ENCODE measurements at regions of chr7 and their contacts with region 1.

Region 1: GRCh38 chr7:134514663-134515062 is 12.7 kb upstream of the AKR1B10 start:
- DNase-seq: peak; percentile 23
- ATAC-seq: peak; percentile 82
- H3K4me3 Mint-ChIP-seq: no peak overlapping the region
- H3K27ac Mint-ChIP-seq: no peak overlapping the region
- H3K4me1 Mint-ChIP-seq: peaks cover 9% of the 10 kb centered on the region
- H3K27me3 Mint-ChIP-seq: peaks cover 10% of the 10 kb centered on the region
- CTCF ChIP-seq: peak; percentile 78

Region 2: DNA sequence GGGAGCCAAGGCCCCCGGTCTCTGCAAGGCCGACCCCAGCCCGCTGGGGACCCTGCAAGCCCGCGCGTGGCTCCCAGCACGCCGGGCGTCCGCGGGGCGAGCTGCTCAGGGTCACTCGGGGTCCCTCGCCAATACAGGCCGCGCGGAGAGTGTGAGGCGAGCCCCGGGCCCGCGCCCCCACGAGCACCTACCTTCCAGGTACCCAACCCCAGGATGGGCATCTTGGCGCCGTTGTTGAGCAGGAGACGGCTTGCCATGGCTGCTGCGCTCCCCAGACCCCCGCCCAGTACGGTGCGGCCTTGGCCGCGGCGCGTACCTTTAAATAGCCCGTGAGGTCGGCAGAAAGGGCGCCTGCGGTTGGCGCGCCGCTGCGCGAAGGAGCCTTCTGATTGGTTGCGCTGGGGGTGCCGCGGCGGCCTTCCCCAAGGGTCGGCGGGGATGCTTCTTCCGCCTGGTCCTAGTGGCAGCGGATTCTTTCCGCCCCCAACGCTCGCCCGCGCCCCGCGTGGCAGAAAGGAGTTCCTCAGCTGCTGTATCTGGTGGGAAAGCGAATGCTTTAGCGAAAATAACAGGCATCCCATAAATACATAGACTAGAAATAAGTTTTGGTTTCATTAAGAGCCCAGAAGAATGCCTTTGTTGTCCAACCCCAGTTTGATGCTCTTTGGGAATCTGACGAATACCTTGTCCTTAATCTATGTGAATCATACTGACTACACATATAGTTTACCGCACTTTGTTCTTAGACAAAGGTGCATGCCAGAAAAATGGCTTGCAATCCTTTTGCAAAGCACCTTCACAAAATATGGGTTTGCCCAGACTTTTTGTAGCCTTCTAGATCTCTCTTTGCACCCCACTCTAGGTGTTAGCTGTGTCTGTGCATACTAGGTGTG is 55.6 kb before region 1 on chr7 and contains the start of gene AKR1B1:
- CTCF ChIA-PET with region 1: interaction called, 18 read pairs
- POLR2A ChIA-PET with region 1: no interaction called
- intact Hi-C with region 1: no loop called
- DNase-seq: peak; percentile 94
- ATAC-seq: peak; percentile 92
- H3K4me3 Mint-ChIP-seq: peak within 1 kb of the TSS; percentile 85
- H3K27ac Mint-ChIP-seq: peak within 1 kb of the TSS; percentile 78
- H3K4me1 Mint-ChIP-seq: peaks cover 46% of the 10 kb centered on the region
- H3K27me3 Mint-ChIP-seq: no peaks in the 10 kb centered on the region
- CTCF ChIP-seq: peak; percentile 50
- total RNA-seq, gene AKR1B1: 106 to 108 TPM

Region 3: GRCh38 chr7:134527979-134528371 is 13.3 kb after region 1 on chr7:
- CTCF ChIA-PET with region 1: interaction called, 16 read pairs
- POLR2A ChIA-PET with region 1: no interaction called
- intact Hi-C with region 1: no loop called
- DNase-seq: no peak
- ATAC-seq: no peak
- H3K4me3 Mint-ChIP-seq: no peak overlapping the region
- H3K27ac Mint-ChIP-seq: no peak overlapping the region
- H3K4me1 Mint-ChIP-seq: no peaks in the 10 kb centered on the region
- H3K27me3 Mint-ChIP-seq: peaks cover 8% of the 10 kb centered on the region
- CTCF ChIP-seq: no peak

Region 4: GRCh38 chr7:134605973-134606923 is 91.6 kb after region 1 on chr7:
- CTCF ChIA-PET with region 1: interaction called, 37 read pairs
- POLR2A ChIA-PET with region 1: no interaction called
- intact Hi-C with region 1: loop called (anchors 2 kb)
- DNase-seq: peak; percentile 76
- ATAC-seq: peak; percentile 98
- H3K4me3 Mint-ChIP-seq: no peak overlapping the region
- H3K27ac Mint-ChIP-seq: no peak overlapping the region
- H3K4me1 Mint-ChIP-seq: peaks cover 3% of the 10 kb centered on the region
- H3K27me3 Mint-ChIP-seq: peaks cover 28% of the 10 kb centered on the region
- CTCF ChIP-seq: peak; percentile 89

Measured in activated CD8-positive, alpha-beta T cell treated with anti-CD3 and anti-CD28 coated beads for 36 hours (primary cell).